ENCODE measurements at regions of chr7 and their contacts with region 1.

Region 1: GRCh38 chr7:80876873-80877414 is 41.9 kb downstream of the SEMA3C start:
- DNase-seq: no peak
- ATAC-seq: no peak
- H3K4me3 ChIP-seq: no peak overlapping the region
- H3K4me3 Mint-ChIP-seq: no peak overlapping the region
- H3K27ac ChIP-seq: no peak overlapping the region
- H3K27ac Mint-ChIP-seq: no peak overlapping the region
- H3K4me1 ChIP-seq: no peaks in the 10 kb centered on the region
- H3K4me1 Mint-ChIP-seq: no peaks in the 10 kb centered on the region
- H3K27me3 ChIP-seq: no peaks in the 10 kb centered on the region
- H3K27me3 Mint-ChIP-seq: no peaks in the 10 kb centered on the region
- CTCF ChIP-seq: no peak

Region 2: DNA sequence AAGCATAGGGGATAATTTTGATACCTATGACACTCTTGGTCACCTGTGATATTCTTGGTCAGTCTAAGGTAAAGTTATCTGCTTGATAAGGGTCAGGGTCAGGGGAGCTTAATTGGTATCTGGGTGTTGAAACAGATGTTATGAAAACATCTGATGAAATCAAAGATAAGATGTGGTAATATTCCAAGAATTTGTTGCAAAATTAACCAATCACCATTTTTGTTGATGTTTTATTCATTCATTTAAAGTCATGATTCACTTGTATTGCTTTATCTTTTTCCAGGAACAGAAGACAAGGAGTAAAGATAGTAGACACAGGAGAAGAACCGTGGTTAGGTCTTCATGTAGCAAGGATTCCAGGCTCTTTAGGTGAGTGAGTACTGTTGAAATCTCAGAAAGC is 61.2 kb before region 1 on chr7:
- CTCF ChIA-PET with region 1: no interaction called
- POLR2A ChIA-PET with region 1: no interaction called
- intact Hi-C with region 1: loop called (anchors 10 kb)
- DNase-seq: no peak
- ATAC-seq: no peak
- H3K4me3 ChIP-seq: no peak overlapping the region
- H3K4me3 Mint-ChIP-seq: no peak overlapping the region
- H3K27ac ChIP-seq: no peak overlapping the region
- H3K27ac Mint-ChIP-seq: no peak overlapping the region
- H3K4me1 ChIP-seq: no peaks in the 10 kb centered on the region
- H3K4me1 Mint-ChIP-seq: no peaks in the 10 kb centered on the region
- H3K27me3 ChIP-seq: no peaks in the 10 kb centered on the region
- H3K27me3 Mint-ChIP-seq: no peaks in the 10 kb centered on the region
- CTCF ChIP-seq: no peak

Measured in B cell (primary cell).